Ovary (tissue), 10 donors: ENCODE measurements at regions of chr14 and their contacts with region 1.

Region 1: GRCh38 chr14:32252030-32252670 is 49.1 kb upstream of the RNU6-8 start:
- DNase-seq: peak in 2 of 5 donors; percentile 37 to 61
- H3K4me3 ChIP-seq: no peak overlapping the region
- H3K27ac ChIP-seq: no peak overlapping the region
- H3K4me1 ChIP-seq: no peaks in the 10 kb centered on the region
- H3K27me3 ChIP-seq: no peaks in the 10 kb centered on the region
- CTCF ChIP-seq: peak in 2 of 3 donors; percentile 62 to 66
- EP300 ChIP-seq: no peak
- POLR2A ChIP-seq: no peak

Region 2: DNA sequence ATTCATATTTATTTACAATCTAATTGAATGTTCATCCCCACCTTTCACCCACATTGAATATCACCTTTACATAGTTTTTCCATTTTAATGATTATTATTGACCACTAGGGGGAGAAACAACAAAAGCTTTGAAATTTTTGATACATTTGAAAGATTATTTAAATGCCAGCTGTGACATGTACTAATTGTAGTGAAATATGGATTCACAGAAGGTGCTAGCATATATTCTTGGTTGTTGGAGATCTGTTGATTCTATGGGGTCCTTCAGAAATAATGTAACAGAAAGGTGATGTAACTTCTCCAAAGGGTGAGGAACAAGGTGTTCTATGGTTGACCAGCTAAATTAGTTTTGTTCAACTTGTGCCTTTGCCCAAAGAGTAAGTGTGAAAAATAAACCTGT is 741.9 kb before region 1 on chr14:
- intact Hi-C with region 1: loop called in 3 of 4 experiments (anchors 5 to 10 kb)
- DNase-seq: no peak
- H3K4me3 ChIP-seq: no peak overlapping the region
- H3K27ac ChIP-seq: no peak overlapping the region
- H3K4me1 ChIP-seq: peaks cover 8% of the 10 kb centered on the region
- H3K27me3 ChIP-seq: no peaks in the 10 kb centered on the region
- CTCF ChIP-seq: peak; percentile 3 to 46 (median 19)
- EP300 ChIP-seq: no peak
- POLR2A ChIP-seq: no peak

Region 3: DNA sequence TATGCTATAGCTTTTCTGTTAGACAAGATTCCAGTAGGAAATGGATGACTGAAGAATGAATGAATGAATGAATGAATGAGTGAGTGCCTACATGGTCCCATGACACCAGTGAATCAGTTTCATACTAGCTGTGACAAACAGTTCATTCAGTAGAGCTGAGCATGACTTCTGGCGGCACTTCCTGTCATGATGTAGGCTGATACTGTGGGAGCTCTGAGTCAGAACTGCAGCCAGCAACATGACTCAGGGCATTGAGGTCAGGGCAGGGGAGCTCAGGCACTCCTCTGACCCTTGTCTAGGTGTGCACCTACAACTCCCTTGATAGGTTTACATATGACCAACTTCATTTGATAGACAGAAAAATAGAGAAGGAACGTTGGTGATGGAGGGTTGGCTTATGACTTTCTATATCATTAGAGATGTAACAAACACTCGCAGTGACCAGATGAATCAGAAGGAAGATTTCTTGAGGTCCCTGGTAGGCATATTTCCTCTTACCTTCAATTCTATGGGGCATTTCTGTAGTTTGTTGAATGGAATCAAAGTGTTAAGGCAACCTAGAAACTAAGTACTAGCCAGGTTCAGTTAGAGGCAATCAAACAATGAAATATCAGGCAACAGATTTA is 314.3 kb before region 1 on chr14:
- intact Hi-C with region 1: loop called in 3 of 4 experiments (anchors 5 to 10 kb)
- DNase-seq: no peak
- H3K4me3 ChIP-seq: no peak overlapping the region
- H3K27ac ChIP-seq: no peak overlapping the region
- H3K4me1 ChIP-seq: no peaks in the 10 kb centered on the region
- H3K27me3 ChIP-seq: no peaks in the 10 kb centered on the region
- CTCF ChIP-seq: no peak
- EP300 ChIP-seq: no peak
- POLR2A ChIP-seq: no peak

Region 4: GRCh38 chr14:32064931-32065330 is 187.2 kb before region 1 on chr14:
- intact Hi-C with region 1: loop called in 3 of 4 experiments (anchors 5 to 10 kb)
- DNase-seq: no peak
- H3K4me3 ChIP-seq: no peak overlapping the region
- H3K27ac ChIP-seq: no peak overlapping the region
- H3K4me1 ChIP-seq: no peaks in the 10 kb centered on the region
- H3K27me3 ChIP-seq: no peaks in the 10 kb centered on the region
- CTCF ChIP-seq: no peak
- EP300 ChIP-seq: no peak
- POLR2A ChIP-seq: no peak

Region 5: GRCh38 chr14:32076278-32077080 is 175.7 kb before region 1 on chr14:
- intact Hi-C with region 1: loop called in 2 of 4 experiments (anchors 5 to 10 kb)
- DNase-seq: peak; percentile 97 to 98 (median 98)
- H3K4me3 ChIP-seq: peak overlapping the region; percentile 95
- H3K27ac ChIP-seq: peak overlapping the region; percentile 95 to 99
- H3K4me1 ChIP-seq: no peaks in the 10 kb centered on the region
- H3K27me3 ChIP-seq: no peaks in the 10 kb centered on the region
- CTCF ChIP-seq: no peak
- EP300 ChIP-seq: no peak
- POLR2A ChIP-seq: peak; percentile 72

Region 6: DNA sequence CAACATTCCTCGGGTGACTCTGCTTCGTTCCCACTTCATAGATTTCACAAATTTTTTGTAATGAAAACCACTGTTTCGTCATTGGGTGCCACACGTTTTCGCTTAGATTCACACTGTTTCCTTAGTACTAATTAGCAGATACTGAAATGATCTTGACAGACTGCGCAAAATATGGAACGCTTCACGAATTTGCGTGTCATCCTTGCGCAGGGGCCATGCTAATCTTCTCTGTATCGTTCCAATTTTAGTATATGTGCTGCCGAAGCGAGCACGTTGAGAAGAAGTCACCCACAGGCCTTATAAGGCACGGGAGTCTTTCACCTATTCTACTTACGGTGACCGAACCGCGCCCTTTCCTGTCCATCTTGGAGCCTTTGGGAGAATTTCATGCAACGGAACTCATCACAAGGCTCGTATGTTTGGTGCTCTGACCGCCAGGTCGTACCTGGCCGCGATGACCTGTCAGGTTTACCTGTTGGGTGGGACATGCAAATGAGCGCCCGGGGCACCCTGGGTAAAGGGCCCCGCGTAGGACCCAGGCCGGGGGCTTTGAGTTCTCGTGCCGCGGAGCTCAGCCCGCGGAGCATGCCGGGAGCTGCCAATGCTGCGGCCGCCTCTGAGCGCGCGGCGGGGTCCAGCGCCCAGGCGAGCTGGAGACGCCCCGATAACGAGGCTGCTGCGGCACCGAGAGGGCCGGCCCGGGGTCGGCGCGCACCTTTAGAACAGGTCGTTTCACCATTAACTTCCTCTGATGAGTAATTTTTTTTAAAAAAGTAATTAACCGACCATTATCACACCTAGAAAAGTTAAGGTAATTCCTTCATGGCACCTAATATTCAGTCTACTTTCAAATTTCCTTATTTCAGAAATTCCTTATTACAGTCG is 48.9 kb before region 1 on chr14 and contains the start of gene RNU6-8:
- intact Hi-C with region 1: loop called in 1 of 4 experiments (anchors 10 kb)
- DNase-seq: peak; percentile 93 to 95 (median 94)
- H3K4me3 ChIP-seq: peak within 1 kb of the TSS; percentile 56
- H3K27ac ChIP-seq: peak within 1 kb of the TSS; percentile 85 to 90
- H3K4me1 ChIP-seq: no peaks in the 10 kb centered on the region
- H3K27me3 ChIP-seq: no peaks in the 10 kb centered on the region
- CTCF ChIP-seq: no peak
- EP300 ChIP-seq: no peak
- POLR2A ChIP-seq: peak; percentile 36
- total RNA-seq, gene RNU6-8: not detected

Region 7: GRCh38 chr14:32307881-32308582 is 55.9 kb after region 1 on chr14:
- intact Hi-C with region 1: no loop called
- DNase-seq: no peak
- H3K4me3 ChIP-seq: no peak overlapping the region
- H3K27ac ChIP-seq: no peak overlapping the region
- H3K4me1 ChIP-seq: no peaks in the 10 kb centered on the region
- H3K27me3 ChIP-seq: no peaks in the 10 kb centered on the region
- CTCF ChIP-seq: no peak
- EP300 ChIP-seq: no peak
- POLR2A ChIP-seq: no peak

Region 8: GRCh38 chr14:32469388-32470160 is 217.4 kb after region 1 on chr14:
- intact Hi-C with region 1: loop called (anchors 10 kb)
- DNase-seq: no peak
- H3K4me3 ChIP-seq: no peak overlapping the region
- H3K27ac ChIP-seq: no peak overlapping the region
- H3K4me1 ChIP-seq: peaks cover 5% of the 10 kb centered on the region
- H3K27me3 ChIP-seq: no peaks in the 10 kb centered on the region
- CTCF ChIP-seq: peak; percentile 25 to 60 (median 35)
- EP300 ChIP-seq: no peak
- POLR2A ChIP-seq: no peak